Posterior cingulate gyrus (tissue), 11 donors: ENCODE measurements at regions of chr9 and their contacts with region 1.

Region 1: DNA sequence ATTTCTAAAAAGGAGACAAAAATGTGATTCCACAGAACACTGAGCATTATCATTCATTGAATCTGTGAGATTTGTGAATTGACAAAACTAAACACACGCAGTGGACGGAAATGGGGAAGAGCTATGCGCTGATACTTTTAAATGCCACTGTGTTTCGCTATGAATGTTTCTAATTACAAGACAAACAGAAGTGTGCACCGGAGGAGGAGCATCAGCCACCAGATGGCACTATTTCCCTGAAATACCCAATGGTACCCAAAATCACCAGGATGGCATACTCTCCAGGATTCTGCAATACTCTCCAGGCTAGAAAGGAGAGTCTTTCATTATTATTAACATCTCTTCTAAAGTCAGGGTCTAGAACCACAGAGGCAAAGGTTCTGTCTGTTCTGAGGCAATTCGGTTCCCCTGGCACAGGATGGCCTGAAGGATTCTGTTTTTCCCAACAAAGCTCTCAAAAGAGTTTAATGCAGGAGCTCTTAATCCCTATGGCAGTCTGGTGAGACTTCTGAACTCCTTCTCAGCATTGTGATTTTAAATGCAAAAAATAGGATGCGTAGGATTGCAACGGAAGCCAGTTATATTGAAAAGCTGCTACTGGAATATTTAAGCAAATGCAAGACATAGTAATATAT is 13.8 kb upstream of the PUM3 start:
- DNase-seq: peak in 9 of 10 donors; percentile 32 to 89 (median 72)

Region 2: DNA sequence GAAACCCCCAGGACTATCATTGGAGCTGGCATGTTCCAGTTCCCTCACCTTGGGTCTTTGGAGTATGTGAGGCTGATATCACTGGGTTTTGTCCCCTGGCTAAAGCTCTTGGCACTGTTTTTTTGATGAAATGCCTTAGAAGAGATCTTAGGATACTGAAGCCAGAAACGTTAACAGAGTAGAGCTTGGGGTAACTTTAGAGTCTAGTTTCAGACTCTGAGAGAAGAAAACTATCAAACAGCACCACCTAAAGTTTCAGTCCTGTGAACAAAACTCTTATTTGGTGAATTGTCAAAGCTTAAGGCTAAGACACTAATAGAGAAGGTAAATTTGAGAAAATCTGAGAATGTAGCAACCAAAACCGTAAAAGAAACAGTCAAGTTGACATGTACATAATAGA is 97.9 kb after region 1 on chr9:
- intact Hi-C with region 1: loop called (anchors 5 kb)
- DNase-seq: no peak

Region 3: GRCh38 chr9:3023449-3023848 is 165.8 kb after region 1 on chr9:
- intact Hi-C with region 1: no loop called
- DNase-seq: no peak

Region 4: DNA sequence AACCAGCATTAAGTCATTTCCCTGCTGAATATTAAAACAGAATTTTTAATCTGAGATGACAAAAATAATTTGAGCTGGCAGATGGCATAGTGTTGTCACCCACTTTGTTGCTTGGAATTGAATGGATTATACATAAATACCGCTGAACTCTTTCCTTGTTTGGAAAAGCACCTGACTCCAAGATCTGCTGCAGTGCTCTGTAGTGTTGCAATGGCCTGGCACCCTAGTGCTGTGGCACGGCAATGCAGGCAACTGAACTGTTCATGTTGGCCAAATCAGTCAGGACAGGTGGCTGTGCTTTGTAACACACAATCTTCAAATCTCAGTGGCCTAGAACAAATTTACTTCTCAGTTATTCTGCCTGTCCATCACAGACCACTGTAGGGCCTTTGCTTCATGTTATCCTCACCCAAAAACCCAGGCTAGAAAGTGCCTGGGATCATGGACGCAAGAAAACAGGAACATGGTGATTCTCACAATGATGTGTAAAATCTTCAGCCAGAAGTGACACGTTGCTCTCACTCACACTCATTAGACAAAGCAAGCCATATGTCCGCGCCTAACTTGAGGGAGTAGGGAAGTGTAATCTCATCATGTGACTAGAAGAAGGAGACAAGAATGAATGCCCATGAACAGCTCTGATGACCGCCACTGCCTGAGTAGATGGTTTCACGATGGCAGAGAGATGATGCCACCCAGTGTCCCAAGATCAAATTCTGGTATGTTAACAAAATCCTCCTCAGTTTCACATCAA is 178.1 kb after region 1 on chr9:
- intact Hi-C with region 1: loop called (anchors 2 kb)
- DNase-seq: peak in 1 of 10 donors; percentile 61

Region 5: DNA sequence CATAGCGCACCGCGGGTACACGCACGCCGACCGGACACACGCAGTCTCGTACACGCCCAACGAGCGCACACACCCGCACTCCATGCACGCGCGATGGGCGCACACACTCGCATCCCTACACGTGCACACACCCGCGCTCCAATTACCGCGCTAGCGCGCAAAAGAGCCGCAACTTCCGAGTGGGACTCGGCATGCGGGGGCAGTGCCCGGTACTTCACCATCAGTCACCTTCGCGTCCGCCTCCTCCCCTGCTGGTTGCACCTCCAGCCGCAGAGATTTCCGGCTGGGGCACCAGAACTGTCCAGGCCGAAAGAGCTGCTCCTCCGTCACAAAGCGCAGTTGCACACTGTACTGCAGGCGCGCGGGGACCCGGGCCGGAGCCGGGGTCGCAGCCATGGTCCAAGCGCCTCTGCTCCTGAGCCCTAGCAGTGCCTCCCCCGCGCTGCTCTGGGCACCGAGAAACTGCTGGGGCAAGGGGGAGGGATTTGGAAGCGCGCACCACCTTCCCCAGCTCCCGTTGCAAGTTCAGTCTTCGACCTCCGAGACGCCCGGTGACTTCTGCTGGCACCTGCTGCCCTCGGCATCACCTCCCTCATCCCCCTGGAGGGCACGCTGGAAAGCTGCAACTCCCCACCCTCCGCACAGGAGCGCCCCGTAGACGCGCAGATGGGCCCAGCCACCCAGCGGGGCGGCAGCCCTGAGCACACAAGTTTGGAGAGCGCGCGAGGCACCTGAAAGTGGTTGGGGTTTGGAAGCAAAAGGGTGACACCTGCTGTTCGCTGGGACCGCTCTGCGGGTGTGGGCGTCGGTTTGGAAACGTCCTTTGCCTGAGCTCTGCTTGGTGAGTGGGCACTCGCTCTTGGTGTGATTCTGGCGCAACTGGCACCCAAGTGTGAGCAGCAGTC is 323.6 kb after region 1 on chr9:
- intact Hi-C with region 1: loop called (anchors 10 kb)
- DNase-seq: peak in 9 of 10 donors; percentile 9 to 94 (median 63)

Region 6: DNA sequence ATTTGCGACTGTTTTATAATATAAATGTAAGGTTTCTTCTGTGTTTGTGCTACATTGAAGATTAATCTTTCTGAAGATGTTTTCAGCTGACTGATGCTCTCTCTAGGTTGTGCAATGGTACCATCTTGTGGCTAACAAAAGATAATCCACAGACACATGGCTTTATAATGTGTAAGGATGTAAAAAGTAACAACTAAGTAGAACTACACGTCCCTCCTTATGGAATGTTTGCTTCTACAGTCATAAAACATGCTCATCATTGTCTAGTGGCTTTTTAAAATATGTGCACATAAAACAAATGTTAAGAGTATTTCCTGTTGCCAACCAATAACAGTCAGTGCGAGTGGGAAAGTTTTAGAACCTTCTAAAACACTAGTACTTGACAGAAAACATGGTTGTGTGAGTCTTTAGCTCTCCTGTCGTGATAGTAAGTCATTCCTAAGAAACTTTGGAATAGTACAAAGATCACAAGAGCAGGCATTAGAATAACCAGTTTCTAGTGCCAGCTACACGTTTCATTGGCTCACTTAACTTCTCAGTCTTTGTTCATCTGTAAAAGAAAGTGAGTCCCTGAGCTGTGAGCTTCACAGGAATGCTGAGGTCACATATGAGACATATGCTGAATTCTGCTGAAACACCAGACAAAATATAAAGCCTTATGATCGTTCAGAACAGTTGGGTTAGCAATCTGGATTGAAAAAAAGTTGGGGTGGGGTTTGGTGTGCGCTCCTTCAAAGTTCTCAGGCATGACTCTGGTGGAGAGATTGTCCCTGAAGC is 1517.9 kb after region 1 on chr9:
- intact Hi-C with region 1: loop called (anchors 5 kb)
- DNase-seq: no peak